ENCODE measurements at regions of chr6 and their contacts with region 1.

Region 1: GRCh38 chr6:32244946-32245398 is 21.1 kb upstream of the NOTCH4 start:
- DNase-seq: no peak
- ATAC-seq: peak; percentile 87
- H3K4me3 ChIP-seq: no peak overlapping the region; the same call in 1 of the 2 replicates
- H3K27ac ChIP-seq: no peak overlapping the region
- H3K4me1 ChIP-seq: no peaks in the 10 kb centered on the region
- H3K27me3 ChIP-seq: no peaks in the 10 kb centered on the region; a peak in 1 of 4 replicates
- CTCF ChIP-seq: peak; percentile 85 to 92 (median 87)
- EP300 ChIP-seq: no peak
- POLR2A ChIP-seq: no peak
- RAD21 ChIP-seq: peak; percentile 86

Region 2: GRCh38 chr6:32118782-32119628 is 126.0 kb before region 1 on chr6:
- CTCF ChIA-PET with region 1: interaction called, 7 read pairs
- POLR2A ChIA-PET with region 1: no interaction called
- RAD21 ChIA-PET with region 1: no interaction called
- SMC1A ChIA-PET with region 1: no interaction called
- in situ Hi-C with region 1: no loop called
- intact Hi-C with region 1: loop called (anchors 5 kb)
- DNase-seq: peak; percentile 24
- ATAC-seq: peak; percentile 99
- H3K4me3 ChIP-seq: no peak overlapping the region
- H3K27ac ChIP-seq: no peak overlapping the region
- H3K4me1 ChIP-seq: no peaks in the 10 kb centered on the region
- H3K27me3 ChIP-seq: no peaks in the 10 kb centered on the region
- CTCF ChIP-seq: peak; percentile 93 to 96 (median 95)
- EP300 ChIP-seq: no peak
- POLR2A ChIP-seq: no peak; the same call in 1 of the 2 replicates
- RAD21 ChIP-seq: peak; percentile 73

Region 3: DNA sequence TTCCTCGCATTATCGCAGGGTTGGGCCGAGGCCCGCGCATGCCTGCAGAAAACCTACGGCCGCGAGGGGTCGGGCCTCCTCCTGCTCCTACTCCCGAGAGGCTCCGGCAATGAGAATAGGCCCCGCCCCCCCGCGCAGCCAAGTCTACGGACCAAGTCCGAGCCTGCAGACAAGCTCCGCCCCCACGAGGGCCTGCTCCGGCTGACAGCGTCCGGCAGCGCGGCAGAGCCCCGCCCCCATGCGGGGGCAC is 49.4 kb before region 1 on chr6:
- CTCF ChIA-PET with region 1: interaction called, 3 read pairs
- POLR2A ChIA-PET with region 1: no interaction called
- RAD21 ChIA-PET with region 1: interaction called, 10 read pairs
- SMC1A ChIA-PET with region 1: interaction called, 3 read pairs
- in situ Hi-C with region 1: no loop called
- intact Hi-C with region 1: no loop called
- DNase-seq: peak; percentile 97
- ATAC-seq: peak; percentile 85
- H3K4me3 ChIP-seq: no peak overlapping the region
- H3K27ac ChIP-seq: no peak overlapping the region; the same call in 1 of the 2 replicates
- H3K4me1 ChIP-seq: peaks cover 26% of the 10 kb centered on the region
- H3K27me3 ChIP-seq: no peaks in the 10 kb centered on the region
- CTCF ChIP-seq: peak; percentile 13 to 34 (median 31); a peak in 4 of 6 replicates
- EP300 ChIP-seq: no peak
- POLR2A ChIP-seq: no peak
- RAD21 ChIP-seq: no peak

Region 4: GRCh38 chr6:32255199-32256153 is 10.5 kb after region 1 on chr6:
- CTCF ChIA-PET with region 1: interaction called, 25 read pairs
- POLR2A ChIA-PET with region 1: interaction called, 4 read pairs
- RAD21 ChIA-PET with region 1: interaction called, 8 read pairs
- SMC1A ChIA-PET with region 1: interaction called, 6 read pairs
- in situ Hi-C with region 1: no loop called
- intact Hi-C with region 1: no loop called
- DNase-seq: no peak
- ATAC-seq: peak; percentile 93
- H3K4me3 ChIP-seq: no peak overlapping the region
- H3K27ac ChIP-seq: no peak overlapping the region; the same call in 1 of the 2 replicates
- H3K4me1 ChIP-seq: peaks cover 10% of the 10 kb centered on the region
- H3K27me3 ChIP-seq: no peaks in the 10 kb centered on the region
- CTCF ChIP-seq: peak; percentile 42 to 70 (median 50)
- EP300 ChIP-seq: no peak
- POLR2A ChIP-seq: no peak
- RAD21 ChIP-seq: peak; percentile 42; the same call in 1 of the 2 replicates

Region 5: DNA sequence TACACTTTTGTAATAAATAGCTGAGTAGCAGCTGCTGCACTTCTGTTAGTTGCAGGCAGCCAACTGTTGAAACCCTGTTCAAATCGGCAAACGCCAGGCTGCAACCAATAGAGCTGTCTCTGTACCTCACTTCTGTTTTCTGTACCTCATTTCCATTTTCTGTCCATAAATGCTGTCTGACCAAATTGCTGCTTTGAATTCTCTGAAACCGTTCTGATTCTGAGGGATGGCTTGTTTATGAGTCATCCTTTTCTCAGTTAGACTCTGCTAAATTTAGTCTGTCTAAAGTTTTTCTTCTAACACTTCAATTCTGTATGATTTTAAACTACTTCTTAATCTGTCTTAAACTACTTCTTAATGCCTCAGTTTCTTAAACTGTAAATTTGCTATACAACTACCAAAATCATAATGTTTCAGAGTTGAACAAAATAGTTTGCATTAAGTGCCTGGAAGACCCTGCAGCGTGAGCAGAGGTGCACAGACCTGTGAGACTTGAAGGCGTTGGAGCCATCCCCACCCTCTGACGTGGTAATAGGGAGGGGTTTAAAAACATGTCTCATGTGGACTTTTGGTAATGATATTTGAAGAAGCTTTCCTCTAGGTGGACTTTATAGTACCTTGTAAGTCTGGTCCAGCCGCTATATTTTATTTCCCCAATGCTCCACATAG is 152.4 kb after region 1 on chr6:
- CTCF ChIA-PET with region 1: interaction called, 20 read pairs
- POLR2A ChIA-PET with region 1: no interaction called
- RAD21 ChIA-PET with region 1: interaction called, 6 read pairs
- SMC1A ChIA-PET with region 1: interaction called, 9 read pairs
- in situ Hi-C with region 1: no loop called
- intact Hi-C with region 1: no loop called
- DNase-seq: peak; percentile 73
- ATAC-seq: peak; percentile 98
- H3K4me3 ChIP-seq: peak overlapping the region; percentile 6; the same call in 1 of the 2 replicates
- H3K27ac ChIP-seq: no peak overlapping the region
- H3K4me1 ChIP-seq: peaks cover 8% of the 10 kb centered on the region
- H3K27me3 ChIP-seq: no peaks in the 10 kb centered on the region
- CTCF ChIP-seq: no peak
- EP300 ChIP-seq: no peak; a peak in 1 of 4 replicates
- POLR2A ChIP-seq: no peak
- RAD21 ChIP-seq: no peak

Region 6: GRCh38 chr6:32402812-32403211 is 157.8 kb after region 1 on chr6:
- CTCF ChIA-PET with region 1: interaction called, 20 read pairs
- POLR2A ChIA-PET with region 1: interaction called, 3 read pairs
- RAD21 ChIA-PET with region 1: interaction called, 6 read pairs
- SMC1A ChIA-PET with region 1: interaction called, 32 read pairs
- in situ Hi-C with region 1: no loop called
- intact Hi-C with region 1: no loop called
- DNase-seq: no peak
- ATAC-seq: no peak
- H3K4me3 ChIP-seq: no peak overlapping the region
- H3K27ac ChIP-seq: no peak overlapping the region
- H3K4me1 ChIP-seq: peaks cover 4% of the 10 kb centered on the region
- H3K27me3 ChIP-seq: peaks cover 2 to 4% of the 10 kb centered on the region in 2 experiments; a peak in 1 of 4 replicates
- CTCF ChIP-seq: no peak
- EP300 ChIP-seq: no peak
- POLR2A ChIP-seq: no peak
- RAD21 ChIP-seq: no peak

Region 7: DNA sequence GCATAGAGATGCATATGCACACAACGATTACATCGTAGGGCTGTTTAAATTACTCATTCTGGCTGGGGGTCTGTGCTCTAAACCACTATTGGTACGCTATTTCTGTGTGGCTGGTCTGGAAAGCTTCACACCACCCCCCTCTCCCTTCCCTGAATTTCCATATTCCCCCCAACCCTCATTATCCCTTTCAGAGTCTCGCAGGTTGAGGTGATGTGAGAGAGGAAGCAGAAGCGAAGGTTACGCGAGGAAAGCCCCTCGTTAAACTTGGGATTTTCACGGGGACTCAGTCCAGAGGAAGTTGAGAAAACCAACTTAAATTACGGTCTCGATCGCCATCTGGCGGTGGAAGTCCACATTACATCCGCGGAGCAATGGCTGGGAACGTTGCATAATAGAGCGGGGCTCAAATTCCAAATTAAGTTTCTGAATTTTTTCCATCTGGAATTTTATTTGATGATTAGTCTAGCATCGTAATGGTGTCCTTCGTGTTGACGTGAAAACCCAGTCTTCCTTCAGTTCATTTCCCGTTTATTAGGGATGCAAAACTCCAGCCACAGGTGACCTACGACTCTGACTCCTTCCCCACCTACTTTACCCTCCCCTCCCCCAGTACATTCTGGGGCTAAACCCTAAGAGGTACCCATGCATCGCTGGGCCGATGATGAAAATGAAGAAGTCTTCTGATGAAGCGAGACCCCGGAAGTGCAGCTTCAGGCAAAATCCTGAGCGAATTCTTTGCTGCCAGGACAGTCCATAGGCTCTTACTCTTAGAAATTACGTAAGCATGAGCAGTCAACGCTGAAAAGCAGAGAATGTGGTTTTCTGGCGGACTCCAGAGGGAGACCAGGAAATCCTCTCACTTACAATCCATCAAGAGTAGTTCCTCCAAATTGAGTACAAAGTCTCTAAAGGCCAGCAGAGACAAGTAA is 552.1 kb after region 1 on chr6:
- CTCF ChIA-PET with region 1: no interaction called
- POLR2A ChIA-PET with region 1: no interaction called
- RAD21 ChIA-PET with region 1: no interaction called
- SMC1A ChIA-PET with region 1: interaction called, 4 read pairs
- in situ Hi-C with region 1: no loop called
- intact Hi-C with region 1: loop called (anchors 5 kb)
- DNase-seq: no peak
- ATAC-seq: peak; percentile 89
- H3K4me3 ChIP-seq: peak overlapping the region; percentile 29; the same call in 1 of the 2 replicates
- H3K27ac ChIP-seq: peak overlapping the region; percentile 32
- H3K4me1 ChIP-seq: peaks cover 19% of the 10 kb centered on the region
- H3K27me3 ChIP-seq: peaks cover 0 to 5% of the 10 kb centered on the region in 2 experiments; a peak in 2 of 4 replicates
- CTCF ChIP-seq: peak; percentile 69 to 89 (median 86)
- EP300 ChIP-seq: no peak
- POLR2A ChIP-seq: no peak
- RAD21 ChIP-seq: peak; percentile 74